HAP-1 (cell line): ENCODE measurements at regions of chr16 and their contacts with region 1.

Region 1: DNA sequence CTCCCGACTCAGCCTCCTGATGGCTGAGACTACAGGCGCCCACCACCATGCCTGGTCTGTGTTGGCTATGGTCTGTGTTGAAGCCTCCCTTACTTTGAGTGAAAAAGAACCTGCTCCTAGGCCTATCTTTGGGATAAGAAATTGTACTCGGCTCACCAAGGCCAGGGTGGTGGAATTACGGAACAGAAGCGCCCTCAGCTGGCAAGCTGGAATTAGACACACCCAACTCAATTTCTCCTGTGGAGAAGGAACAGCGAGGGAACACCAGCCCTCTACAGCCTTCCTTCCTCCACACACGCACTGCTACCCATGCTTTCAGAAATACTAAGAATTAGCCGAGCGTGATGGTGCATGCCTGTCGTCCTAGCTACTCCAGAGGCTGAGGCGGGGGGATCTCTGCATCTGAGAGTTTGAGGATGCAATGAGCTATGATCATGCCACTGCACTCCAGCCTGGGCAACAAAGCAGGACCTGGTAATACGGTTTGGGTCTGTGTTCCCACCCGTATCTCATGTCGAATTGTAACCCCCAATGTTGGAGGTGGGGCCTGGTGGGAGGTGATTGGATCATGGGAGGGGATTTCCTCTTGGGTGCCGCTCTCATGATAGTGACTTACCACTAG is 40.1 kb upstream of the RBBP6 start:
- DNase-seq: peak; percentile 55 to 69
- H3K4me3 ChIP-seq: no peak overlapping the region
- H3K4me1 ChIP-seq: no peaks in the 10 kb centered on the region; the same call in 1 of the 2 replicates
- H3K27me3 ChIP-seq: no peaks in the 10 kb centered on the region

Region 2: GRCh38 chr16:24041826-24042631 is 457.3 kb before region 1 on chr16:
- in situ Hi-C with region 1: loop called (anchors 5 kb)
- DNase-seq: peak; percentile 56 to 83
- H3K4me3 ChIP-seq: no peak overlapping the region
- H3K4me1 ChIP-seq: no peaks in the 10 kb centered on the region
- H3K27me3 ChIP-seq: no peaks in the 10 kb centered on the region